ENCODE measurements at regions of chr4 and their contacts with region 1.

Region 1: DNA sequence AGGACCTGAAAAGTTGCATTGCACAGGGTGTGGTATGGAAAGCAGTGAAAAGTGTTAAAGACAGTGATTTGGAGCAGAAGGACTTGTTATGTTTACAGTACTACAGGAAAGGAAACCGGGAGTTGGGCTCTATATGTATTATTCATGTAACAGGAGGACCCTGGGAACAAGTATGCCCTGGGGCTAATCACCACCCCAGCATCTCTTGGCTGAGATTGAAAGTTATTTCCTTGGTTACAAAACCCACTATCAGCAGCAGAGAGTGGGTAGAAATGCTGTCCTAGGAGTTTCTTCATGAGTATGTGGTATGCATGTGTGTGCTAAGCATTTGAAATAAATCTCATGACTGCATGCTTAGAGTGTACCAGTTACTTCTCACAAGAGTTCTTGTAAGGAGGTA is 46.9 kb downstream of the STK32B start:
- DNase-seq: no peak
- ATAC-seq: no peak
- H3K4me3 ChIP-seq: no peak overlapping the region
- H3K27ac ChIP-seq: no peak overlapping the region
- H3K4me1 ChIP-seq: no peaks in the 10 kb centered on the region
- H3K27me3 ChIP-seq: no peaks in the 10 kb centered on the region
- CTCF ChIP-seq: no peak

Region 2: GRCh38 chr4:4775493-4776004 is 322.6 kb before region 1 on chr4:
- CTCF ChIA-PET with region 1: no interaction called
- POLR2A ChIA-PET with region 1: no interaction called
- in situ Hi-C with region 1: no loop called
- intact Hi-C with region 1: no loop called
- DNase-seq: no peak
- ATAC-seq: no peak
- H3K4me3 ChIP-seq: no peak overlapping the region
- H3K27ac ChIP-seq: no peak overlapping the region
- H3K4me1 ChIP-seq: no peaks in the 10 kb centered on the region
- H3K27me3 ChIP-seq: no peaks in the 10 kb centered on the region
- CTCF ChIP-seq: no peak

Region 3: DNA sequence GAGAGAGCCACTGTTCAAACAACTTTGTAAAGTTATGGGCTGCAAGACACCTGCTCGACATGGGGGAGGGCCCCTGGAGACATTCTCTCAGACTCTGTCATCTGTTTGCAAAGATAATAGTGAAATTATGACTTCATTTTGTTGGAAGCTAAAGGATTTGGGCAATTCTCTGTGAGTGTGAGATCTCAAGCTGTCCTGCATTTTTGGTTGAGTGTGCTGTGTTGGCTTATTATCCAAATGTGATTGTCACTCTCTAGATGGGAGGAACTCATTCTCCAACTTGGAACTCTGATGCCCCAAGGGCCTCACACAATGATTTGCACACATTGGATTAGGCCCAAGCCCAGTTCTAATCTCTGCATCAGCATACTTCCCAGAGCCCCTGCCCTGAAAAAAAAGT is 16.8 kb after region 1 on chr4:
- CTCF ChIA-PET with region 1: no interaction called
- POLR2A ChIA-PET with region 1: interaction called, 15 read pairs
- in situ Hi-C with region 1: no loop called
- intact Hi-C with region 1: no loop called
- DNase-seq: no peak
- ATAC-seq: no peak; the same call in 1 of the 2 replicates
- H3K4me3 ChIP-seq: no peak overlapping the region
- H3K27ac ChIP-seq: no peak overlapping the region
- H3K4me1 ChIP-seq: peaks cover 11% of the 10 kb centered on the region
- H3K27me3 ChIP-seq: no peaks in the 10 kb centered on the region
- CTCF ChIP-seq: no peak